ENCODE measurements at regions of chr6 and their contacts with region 1.

Region 1: DNA sequence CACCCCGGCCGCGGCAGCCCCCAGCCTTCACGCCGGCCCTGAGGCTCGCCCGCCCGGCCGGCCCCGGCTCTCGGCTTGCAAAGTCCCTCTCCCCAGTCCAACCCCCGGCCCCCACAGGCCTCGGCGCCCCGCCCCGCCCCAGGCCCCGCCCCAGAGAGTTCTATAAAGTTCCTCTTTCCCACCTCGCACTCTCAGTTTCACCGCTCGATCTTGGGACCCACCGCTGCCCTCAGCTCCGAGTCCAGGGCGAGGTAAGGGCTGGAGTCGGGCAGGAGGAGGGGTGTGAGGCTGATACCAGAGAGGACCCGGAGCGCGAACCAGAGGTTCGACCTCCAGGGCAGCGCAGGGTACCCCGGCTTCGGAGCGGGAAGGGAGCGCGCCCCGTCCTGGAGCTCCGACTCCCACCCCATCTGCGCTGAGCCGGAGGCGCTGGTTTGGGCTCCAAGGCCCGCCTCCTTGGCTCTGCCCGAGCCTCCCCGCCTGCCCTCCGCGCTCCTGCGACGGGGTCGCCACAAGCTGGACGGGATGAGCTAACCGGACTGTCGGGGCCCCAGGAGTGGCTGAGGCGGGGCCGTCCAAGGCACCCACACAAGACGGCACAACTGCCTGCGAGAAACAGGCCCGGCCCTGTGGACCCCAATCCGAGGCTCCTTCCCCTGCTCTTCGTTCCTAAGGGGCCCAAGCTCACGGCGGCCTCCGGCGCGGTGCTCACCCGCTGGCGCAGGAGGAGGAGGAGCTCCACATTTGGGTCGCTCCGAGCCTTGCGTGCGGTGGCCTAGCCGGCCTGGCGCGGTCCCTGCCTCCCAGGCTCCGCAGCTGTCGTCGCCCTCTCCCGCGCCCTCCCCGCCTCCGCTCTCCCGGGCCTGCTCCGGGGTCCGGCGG is at the start of gene IRF4:
- DNase-seq: peak; percentile 87
- ATAC-seq: peak; percentile 52
- H3K4me3 Mint-ChIP-seq: peak within 1 kb of the TSS; percentile 94
- H3K27ac Mint-ChIP-seq: peak within 1 kb of the TSS; percentile 98
- H3K4me1 Mint-ChIP-seq: peaks cover 48% of the 10 kb centered on the region
- H3K27me3 Mint-ChIP-seq: peaks cover 3% of the 10 kb centered on the region
- total RNA-seq, gene IRF4: 601 to 617 TPM

Region 2: DNA sequence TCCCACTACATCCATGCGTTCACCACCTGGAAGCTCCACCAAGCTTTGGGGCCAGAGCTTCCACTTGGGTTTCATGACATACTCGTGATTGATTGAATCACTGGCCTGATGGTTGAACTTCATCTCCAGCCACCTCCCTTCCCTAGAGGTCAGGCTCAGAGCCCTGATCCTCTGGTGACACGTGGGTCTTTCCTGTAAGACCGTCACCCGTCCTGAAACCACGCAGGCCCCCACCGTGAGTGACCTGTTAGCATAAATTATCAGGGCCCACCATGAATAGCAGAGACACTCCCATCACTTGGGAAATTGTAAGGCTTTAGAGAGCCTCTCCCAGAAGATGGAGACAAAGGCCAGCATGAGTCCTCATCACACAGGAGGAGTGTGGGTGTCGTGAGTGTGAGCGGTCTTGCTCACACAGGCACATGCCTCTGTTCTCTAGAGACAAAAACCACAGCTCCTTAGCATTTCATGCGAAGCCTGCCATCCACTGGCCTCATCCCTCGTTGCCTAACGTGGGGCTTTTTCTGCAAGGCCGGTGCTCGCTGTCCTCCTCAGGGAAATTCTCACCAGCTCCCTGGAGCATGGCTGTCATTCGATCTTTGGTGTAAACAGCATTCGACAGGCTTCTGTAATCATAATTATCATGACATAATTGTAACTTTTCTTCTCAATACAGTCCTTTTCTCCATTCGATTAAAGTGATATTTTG is 164.6 kb before region 1 on chr6:
- CTCF ChIA-PET with region 1: interaction called, 6 read pairs
- POLR2A ChIA-PET with region 1: interaction called, 28 read pairs
- intact Hi-C with region 1: loop called (anchors 1 to 2 kb)
- DNase-seq: peak; percentile 61
- ATAC-seq: no peak
- H3K4me3 Mint-ChIP-seq: no peak overlapping the region
- H3K27ac Mint-ChIP-seq: peak overlapping the region; percentile 52
- H3K4me1 Mint-ChIP-seq: peaks cover 70% of the 10 kb centered on the region
- H3K27me3 Mint-ChIP-seq: peaks cover 2% of the 10 kb centered on the region

Region 3: DNA sequence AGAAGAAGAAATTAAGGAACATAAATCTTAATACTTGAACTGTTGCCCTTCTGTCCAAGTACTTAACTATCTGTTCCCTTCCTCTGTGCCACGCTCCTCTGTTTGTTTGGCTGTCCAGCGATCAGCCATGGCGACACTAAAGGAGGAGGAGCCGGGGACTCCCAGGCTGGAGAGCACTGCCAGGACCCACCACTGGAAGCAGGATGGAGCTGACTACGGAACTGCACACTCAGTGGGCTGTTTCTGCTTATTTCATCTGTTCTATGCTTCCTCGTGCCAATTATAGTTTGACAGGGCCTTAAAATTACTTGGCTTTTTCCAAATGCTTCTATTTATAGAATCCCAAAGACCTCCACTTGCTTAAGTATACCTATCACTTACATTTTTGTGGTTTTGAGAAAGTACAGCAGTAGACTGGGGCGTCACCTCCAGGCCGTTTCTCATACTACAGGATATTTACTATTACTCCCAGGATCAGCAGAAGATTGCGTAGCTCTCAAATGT is 16.9 kb after region 1 on chr6:
- CTCF ChIA-PET with region 1: interaction called, 12 read pairs
- POLR2A ChIA-PET with region 1: interaction called, 121 read pairs
- intact Hi-C with region 1: loop called in 1 of 2 experiments (anchors 1 kb)
- DNase-seq: peak; percentile 50
- ATAC-seq: no peak
- H3K4me3 Mint-ChIP-seq: no peak overlapping the region
- H3K27ac Mint-ChIP-seq: peak overlapping the region; percentile 59
- H3K4me1 Mint-ChIP-seq: peaks cover 73% of the 10 kb centered on the region
- H3K27me3 Mint-ChIP-seq: no peaks in the 10 kb centered on the region

Region 4: DNA sequence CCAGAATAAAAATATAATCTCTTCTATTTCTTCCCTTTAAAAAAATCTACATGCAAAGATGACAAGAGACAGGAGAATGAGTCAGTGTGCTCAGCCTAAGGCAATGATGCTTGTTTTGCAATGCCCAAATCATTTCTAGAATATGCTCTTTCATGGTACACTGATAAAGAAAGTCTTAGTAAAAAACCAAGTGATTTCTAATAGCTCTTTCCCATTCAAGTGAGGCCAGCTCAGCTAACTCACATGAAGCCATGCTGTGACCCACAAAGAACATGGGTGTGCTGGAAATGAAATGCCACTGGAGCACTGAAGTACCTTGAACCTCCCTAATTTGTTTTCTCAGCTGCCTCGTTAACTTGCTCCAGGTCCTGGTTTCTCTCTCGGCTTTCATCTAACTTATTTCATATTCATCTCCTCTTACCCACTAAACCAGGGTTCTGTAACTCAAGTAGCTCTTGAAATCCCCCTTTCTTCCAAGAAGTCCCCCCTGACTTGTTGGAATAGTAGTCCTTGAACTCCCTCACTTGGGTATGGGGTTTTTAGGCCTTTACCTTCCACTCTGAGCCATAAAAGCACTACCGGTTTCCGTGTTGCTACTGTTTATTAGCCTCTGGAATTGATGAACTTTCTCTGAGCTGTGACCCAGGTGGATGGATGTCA is 92.4 kb after region 1 on chr6:
- CTCF ChIA-PET with region 1: interaction called, 12 read pairs
- POLR2A ChIA-PET with region 1: interaction called, 17 read pairs
- intact Hi-C with region 1: loop called in 1 of 2 experiments (anchors 1 kb)
- DNase-seq: peak; percentile 73
- ATAC-seq: peak; percentile 92
- H3K4me3 Mint-ChIP-seq: peak overlapping the region; percentile 58
- H3K27ac Mint-ChIP-seq: peak overlapping the region; percentile 100
- H3K4me1 Mint-ChIP-seq: peaks cover 88% of the 10 kb centered on the region
- H3K27me3 Mint-ChIP-seq: no peaks in the 10 kb centered on the region

Region 5: GRCh38 chr6:548517-548916 is 156.7 kb after region 1 on chr6:
- CTCF ChIA-PET with region 1: interaction called, 5 read pairs
- POLR2A ChIA-PET with region 1: interaction called, 6 read pairs
- intact Hi-C with region 1: loop called (anchors 1 to 2 kb)
- DNase-seq: peak; percentile 75
- ATAC-seq: peak; percentile 90
- H3K4me3 Mint-ChIP-seq: peak overlapping the region; percentile 57
- H3K27ac Mint-ChIP-seq: peak overlapping the region; percentile 92
- H3K4me1 Mint-ChIP-seq: peaks cover 70% of the 10 kb centered on the region
- H3K27me3 Mint-ChIP-seq: no peaks in the 10 kb centered on the region

Region 6: DNA sequence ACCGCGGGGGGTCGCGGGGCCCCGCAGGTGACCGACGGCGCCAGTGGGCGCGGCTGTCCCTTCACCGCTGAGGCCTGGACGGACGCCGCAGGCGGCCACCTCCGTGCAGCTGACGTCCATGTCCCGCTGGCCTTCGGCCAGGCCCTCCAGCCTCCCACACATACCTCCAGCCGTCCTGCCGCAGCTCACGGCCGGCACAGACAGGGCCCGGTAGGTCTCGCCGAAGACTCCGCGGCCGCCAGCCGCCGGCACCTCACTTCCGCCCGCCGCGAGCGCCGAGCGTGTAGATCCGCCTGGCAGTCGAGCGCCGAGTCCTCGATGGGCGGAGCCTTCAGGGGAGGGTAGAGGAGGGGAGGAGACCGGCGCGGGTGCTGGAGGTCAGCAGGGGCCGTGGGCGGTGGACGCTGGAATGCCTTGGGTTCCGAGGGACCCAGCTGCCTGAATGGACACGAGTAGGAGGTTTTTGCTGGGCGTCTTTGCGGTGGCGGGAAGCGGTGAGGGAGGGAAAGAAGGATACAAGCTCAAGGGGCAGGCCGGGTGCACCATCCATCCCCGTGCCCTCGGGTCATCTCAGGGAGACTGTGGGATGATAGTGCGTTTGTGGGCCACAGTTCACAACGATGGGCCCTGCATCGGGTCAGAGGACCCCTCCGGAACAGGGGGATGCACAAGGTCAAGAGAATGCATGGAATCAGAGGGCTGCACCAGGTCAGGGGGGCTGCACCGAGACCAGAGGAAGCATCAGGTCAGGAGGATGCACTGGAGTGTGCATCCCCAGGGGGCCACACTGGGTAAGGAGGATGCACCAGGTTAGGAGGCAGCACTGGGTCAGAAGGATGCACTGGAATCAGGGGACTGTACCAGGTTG is 301.3 kb after region 1 on chr6 and contains the start of gene EXOC2:
- CTCF ChIA-PET with region 1: no interaction called
- POLR2A ChIA-PET with region 1: no interaction called
- intact Hi-C with region 1: loop called (anchors 2 to 5 kb)
- DNase-seq: peak; percentile 91
- ATAC-seq: peak; percentile 84
- H3K4me3 Mint-ChIP-seq: peak within 1 kb of the TSS; percentile 91
- H3K27ac Mint-ChIP-seq: peak within 1 kb of the TSS; percentile 92
- H3K4me1 Mint-ChIP-seq: peaks cover 26% of the 10 kb centered on the region
- H3K27me3 Mint-ChIP-seq: no peaks in the 10 kb centered on the region
- total RNA-seq, gene EXOC2: 31.9 to 38.9 TPM

Region 7: DNA sequence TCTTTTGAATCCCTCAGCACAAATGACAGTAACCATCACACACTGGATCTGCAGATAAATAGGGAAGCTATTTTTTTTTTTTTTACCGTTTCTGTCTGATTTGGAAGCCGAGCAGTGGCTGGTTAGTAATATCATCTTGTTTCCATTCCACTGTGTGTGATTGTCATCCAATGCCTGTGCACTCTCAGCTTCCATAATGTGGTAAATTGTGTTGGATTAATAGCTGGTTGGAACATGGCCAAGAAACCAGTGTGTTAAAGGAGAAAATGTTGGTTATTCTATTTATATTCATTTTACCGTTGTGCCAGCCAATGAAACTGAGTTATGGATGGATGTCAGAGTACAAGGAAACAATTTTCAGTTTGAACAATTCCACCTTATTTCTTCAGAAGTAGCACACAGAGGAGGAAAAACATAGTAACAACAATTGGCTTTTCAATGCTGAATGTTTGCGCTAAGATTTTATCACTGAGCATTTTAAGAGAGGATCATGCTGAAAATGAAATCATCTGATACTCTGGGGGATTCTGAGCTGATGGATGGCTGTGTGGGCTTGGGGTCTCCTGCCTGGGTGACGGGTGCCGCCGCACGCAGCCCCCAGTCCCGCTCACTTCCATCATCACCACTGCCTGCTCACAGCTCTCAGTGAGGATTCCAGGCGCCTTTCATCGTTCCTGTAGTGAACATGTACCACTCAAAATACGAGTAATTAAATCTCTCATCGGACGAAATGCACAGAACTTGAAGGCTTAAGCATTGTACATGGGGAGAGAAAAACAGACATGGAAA is 341.8 kb after region 1 on chr6:
- CTCF ChIA-PET with region 1: no interaction called
- POLR2A ChIA-PET with region 1: no interaction called
- intact Hi-C with region 1: no loop called
- DNase-seq: no peak
- ATAC-seq: no peak
- H3K4me3 Mint-ChIP-seq: no peak overlapping the region
- H3K27ac Mint-ChIP-seq: no peak overlapping the region
- H3K4me1 Mint-ChIP-seq: no peaks in the 10 kb centered on the region
- H3K27me3 Mint-ChIP-seq: peaks cover 17% of the 10 kb centered on the region

Measured in activated CD4-positive, alpha-beta T cell treated with anti-CD3 and anti-CD28 coated beads for 36 hours (primary cell).